IMR-90 (cell line): ENCODE measurements at regions of chr10 and their contacts with region 1.

Region 1: DNA sequence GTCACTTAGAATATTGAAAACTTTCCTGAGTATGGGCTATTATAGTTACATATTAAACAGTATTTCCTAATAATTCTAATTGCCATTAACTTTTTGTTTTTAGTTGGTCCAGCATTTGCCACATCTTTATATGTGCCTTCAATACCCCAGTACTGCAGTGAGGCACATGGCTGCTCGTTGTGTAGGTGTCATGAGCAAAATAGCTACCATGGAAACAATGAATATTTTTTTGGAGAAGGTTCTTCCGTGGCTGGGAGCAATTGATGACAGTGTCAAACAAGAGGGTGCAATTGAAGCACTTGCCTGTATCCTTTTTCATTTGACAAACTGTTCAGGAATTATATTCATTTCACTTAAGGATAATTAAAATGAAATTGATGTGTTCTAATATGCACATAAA is 72.7 kb downstream of the BTAF1 start:
- DNase-seq: no peak
- ATAC-seq: no peak
- H3K4me3 ChIP-seq: no peak overlapping the region
- H3K27ac ChIP-seq: no peak overlapping the region
- H3K4me1 ChIP-seq: no peaks in the 10 kb centered on the region
- H3K27me3 ChIP-seq: no peaks in the 10 kb centered on the region
- CTCF ChIP-seq: no peak
- POLR2A ChIP-seq: no peak
- RAD21 ChIP-seq: no peak

Region 2: GRCh38 chr10:92031580-92031979 is 35.3 kb after region 1 on chr10:
- CTCF ChIA-PET with region 1: no interaction called
- POLR2A ChIA-PET with region 1: no interaction called
- dilution Hi-C with region 1: no loop called
- in situ Hi-C with region 1: no loop called
- intact Hi-C with region 1: loop called (anchors 5 kb)
- DNase-seq: no peak
- ATAC-seq: no peak
- H3K4me3 ChIP-seq: no peak overlapping the region
- H3K27ac ChIP-seq: no peak overlapping the region
- H3K4me1 ChIP-seq: no peaks in the 10 kb centered on the region
- H3K27me3 ChIP-seq: no peaks in the 10 kb centered on the region
- CTCF ChIP-seq: no peak
- POLR2A ChIP-seq: no peak
- RAD21 ChIP-seq: no peak